Activated CD4-positive, alpha-beta T cell treated with anti-CD3 and anti-CD28 coated beads, Interleukin-2, amount 10 ng/mL, durations not matched to agents 24 days and 14 days (primary cell): ENCODE measurements at regions of chr2 and their contacts with region 1.

Region 1: DNA sequence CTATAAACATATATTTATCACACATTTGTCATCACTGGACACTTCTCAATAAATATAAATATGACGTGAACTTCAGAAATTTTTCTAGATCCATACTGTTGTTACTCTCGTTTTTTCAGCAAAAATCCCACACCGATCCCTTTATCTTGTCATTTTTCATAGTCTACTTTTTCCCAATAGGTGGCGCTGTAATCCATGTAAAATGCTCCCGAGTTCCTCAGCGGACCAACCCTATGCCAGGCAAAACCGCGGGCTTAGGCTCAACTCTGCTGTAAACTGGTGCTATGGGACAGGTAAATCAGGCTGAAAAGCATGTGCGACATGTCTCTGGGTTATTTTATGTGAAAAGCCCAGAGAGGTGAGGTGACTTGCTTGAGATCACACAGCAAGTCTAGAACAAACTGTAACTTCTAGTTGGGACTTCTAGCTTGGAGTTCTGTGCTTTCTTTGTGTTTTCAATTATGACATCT is 104.0 kb downstream of the COBLL1 start:
- DNase-seq: peak; percentile 73
- H3K4me3 Mint-ChIP-seq: no peak overlapping the region
- H3K27ac Mint-ChIP-seq: no peak overlapping the region
- H3K4me1 Mint-ChIP-seq: peaks cover 3% of the 10 kb centered on the region
- H3K27me3 Mint-ChIP-seq: peaks cover 15% of the 10 kb centered on the region

Region 2: DNA sequence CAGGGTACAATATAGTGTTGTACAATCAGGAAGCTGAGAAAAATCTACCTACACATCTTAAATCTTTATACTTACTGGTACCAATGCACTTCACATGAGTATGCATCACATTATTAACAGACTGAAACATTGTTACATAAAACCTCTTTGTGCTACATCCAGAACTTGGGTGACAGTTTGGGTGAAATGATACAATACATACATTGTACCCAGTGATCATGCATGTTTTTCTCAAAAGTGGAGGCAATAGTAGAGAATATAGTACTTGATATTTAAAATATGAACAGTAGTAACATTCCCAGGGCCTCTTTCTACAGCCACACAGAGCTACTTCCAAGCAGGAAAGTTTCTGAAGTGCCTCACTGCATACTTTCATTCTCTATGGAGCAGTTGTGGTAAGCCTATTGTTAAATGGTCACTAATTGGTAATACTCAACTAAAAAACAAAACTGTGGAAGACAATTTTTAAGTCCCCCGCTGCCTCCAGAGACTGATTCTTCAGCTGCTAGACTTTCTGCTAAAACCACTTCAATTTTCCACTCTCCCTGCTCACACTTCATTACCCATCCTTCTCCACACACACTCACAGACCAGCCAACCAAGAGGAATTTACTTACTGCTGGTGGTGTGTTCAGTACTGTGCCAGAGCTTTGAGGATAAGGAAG is 93.5 kb before region 1 on chr2:
- intact Hi-C with region 1: no loop called
- DNase-seq: no peak
- H3K4me3 Mint-ChIP-seq: no peak overlapping the region
- H3K27ac Mint-ChIP-seq: no peak overlapping the region
- H3K4me1 Mint-ChIP-seq: no peaks in the 10 kb centered on the region
- H3K27me3 Mint-ChIP-seq: no peaks in the 10 kb centered on the region

Region 3: DNA sequence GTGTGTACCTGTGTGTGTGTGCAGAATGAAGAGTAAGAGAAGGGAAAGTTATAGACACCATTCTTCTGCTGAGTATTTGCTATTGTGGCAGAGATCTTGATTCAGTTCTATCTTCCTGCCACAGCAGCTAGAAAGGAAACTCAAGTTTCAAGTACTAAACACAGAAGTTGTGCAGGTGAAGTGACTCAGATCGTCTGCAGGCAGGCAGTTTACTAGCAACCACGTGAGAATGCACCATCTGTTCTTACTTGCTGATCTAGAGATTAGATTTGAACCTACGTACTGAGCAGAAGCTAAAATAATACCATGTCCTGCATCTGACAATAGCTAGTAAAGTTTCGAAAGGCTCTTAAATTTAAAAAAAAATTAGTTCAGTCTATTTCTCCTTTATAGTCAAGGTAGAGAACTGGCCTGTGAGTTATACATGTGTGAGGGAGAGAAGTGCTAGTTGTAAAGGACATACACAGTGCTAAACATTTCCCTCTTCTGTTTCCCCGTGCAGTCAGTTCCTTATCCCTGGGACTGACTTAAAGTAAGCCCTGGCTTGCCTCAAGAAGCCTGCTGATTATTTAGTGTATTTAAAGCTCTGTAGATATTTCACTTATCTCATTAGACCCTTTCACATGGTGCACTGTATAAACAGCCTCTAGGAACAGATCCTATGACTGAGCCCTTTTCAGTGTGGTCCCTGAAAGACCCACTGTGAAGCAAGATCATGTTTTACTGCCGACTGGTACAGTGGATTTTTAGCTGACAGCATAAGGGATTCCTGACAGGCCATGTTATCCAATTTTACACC is 172.7 kb after region 1 on chr2:
- intact Hi-C with region 1: loop called (anchors 2 kb)
- DNase-seq: peak; percentile 79
- H3K4me3 Mint-ChIP-seq: no peak overlapping the region
- H3K27ac Mint-ChIP-seq: no peak overlapping the region
- H3K4me1 Mint-ChIP-seq: peaks cover 12% of the 10 kb centered on the region
- H3K27me3 Mint-ChIP-seq: peaks cover 10% of the 10 kb centered on the region

Region 4: DNA sequence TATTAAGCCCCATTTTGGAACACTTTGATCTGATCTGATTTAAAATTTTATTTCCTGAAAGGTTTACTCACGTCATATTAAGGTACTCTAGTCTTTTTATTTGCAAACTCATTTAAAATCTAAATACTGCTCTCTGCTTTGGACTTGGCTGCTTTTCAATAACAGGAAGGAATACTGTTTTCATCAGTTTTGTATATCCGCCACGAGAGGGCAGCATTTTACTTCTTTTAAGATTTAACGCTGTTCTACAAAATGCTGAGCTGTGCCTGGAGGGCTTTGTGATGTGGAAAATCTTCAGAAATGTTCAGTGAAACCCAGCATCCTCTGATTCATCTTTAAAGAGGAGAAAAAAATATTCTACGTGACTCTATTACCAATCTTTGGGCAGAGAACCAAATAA is 255.2 kb after region 1 on chr2:
- intact Hi-C with region 1: loop called (anchors 5 kb)
- DNase-seq: peak; percentile 82
- H3K4me3 Mint-ChIP-seq: no peak overlapping the region
- H3K27ac Mint-ChIP-seq: no peak overlapping the region
- H3K4me1 Mint-ChIP-seq: peaks cover 30% of the 10 kb centered on the region
- H3K27me3 Mint-ChIP-seq: peaks cover 2% of the 10 kb centered on the region

Region 5: GRCh38 chr2:165203689-165204559 is 466.3 kb after region 1 on chr2 and contains the start of gene SCN3A:
- intact Hi-C with region 1: loop called (anchors 5 kb)
- DNase-seq: peak; percentile 63
- H3K4me3 Mint-ChIP-seq: peak within 1 kb of the TSS; percentile 27
- H3K27ac Mint-ChIP-seq: no peak within 1 kb of the TSS
- H3K4me1 Mint-ChIP-seq: peaks cover 2% of the 10 kb centered on the region
- H3K27me3 Mint-ChIP-seq: peaks cover 5% of the 10 kb centered on the region
- total RNA-seq, gene SCN3A: 0.05 TPM in 1 of 2 replicates, not detected in the other

Region 6: DNA sequence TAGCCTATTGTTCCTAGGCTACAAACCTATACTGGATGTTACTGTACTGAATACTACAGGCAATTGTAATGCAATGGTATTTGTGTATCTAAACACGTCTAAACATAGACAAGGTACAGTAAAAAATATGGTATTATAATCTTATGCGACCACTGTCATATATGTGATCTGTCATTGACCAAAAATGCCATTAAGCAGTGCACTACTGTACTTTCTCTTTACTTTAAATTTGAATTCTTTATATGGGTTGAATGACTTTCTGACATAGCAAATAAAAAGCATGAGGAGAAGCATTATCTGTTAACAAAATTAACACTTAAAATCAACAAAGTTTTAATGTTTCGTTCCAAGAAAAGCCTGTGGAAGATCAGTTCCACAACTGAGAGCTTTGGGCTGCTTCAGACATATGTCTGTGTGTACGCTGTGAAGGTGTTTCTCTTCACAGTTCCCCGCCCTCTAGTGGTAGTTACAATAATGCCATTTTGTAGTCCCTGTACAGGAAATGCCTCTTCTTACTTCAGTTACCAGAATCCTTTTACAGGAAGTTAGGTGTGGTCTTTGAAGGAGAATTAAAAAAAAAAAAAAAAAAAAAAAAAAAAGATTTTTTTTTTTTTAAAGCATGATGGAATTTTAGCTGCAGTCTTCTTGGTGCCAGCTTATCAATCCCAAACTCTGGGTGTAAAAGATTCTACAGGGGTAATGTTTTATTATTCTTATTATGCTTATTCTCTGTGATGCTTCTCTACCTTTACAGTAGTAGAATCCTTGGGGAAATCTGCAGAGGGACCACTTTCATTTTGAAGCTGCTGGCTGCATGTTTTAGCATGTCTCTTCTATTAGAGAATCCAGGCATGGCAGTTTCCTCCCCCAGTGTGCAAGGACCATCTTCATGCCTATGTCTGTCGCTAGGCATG is 556.0 kb after region 1 on chr2:
- intact Hi-C with region 1: loop called (anchors 10 kb)
- DNase-seq: peak; percentile 90
- H3K4me3 Mint-ChIP-seq: no peak overlapping the region
- H3K27ac Mint-ChIP-seq: no peak overlapping the region
- H3K4me1 Mint-ChIP-seq: peaks cover 2% of the 10 kb centered on the region
- H3K27me3 Mint-ChIP-seq: peaks cover 12% of the 10 kb centered on the region